Calu3 (cell line): ENCODE measurements at regions of chr2 and their contacts with region 1.

Region 1: GRCh38 chr2:32484937-32485336 is 128.1 kb downstream of the BIRC6 start:
- DNase-seq: no peak
- H3K4me3 Mint-ChIP-seq: no peak overlapping the region
- H3K27ac Mint-ChIP-seq: no peak overlapping the region
- H3K4me1 Mint-ChIP-seq: no peaks in the 10 kb centered on the region
- H3K27me3 Mint-ChIP-seq: no peaks in the 10 kb centered on the region
- CTCF ChIP-seq: no peak

Region 2: DNA sequence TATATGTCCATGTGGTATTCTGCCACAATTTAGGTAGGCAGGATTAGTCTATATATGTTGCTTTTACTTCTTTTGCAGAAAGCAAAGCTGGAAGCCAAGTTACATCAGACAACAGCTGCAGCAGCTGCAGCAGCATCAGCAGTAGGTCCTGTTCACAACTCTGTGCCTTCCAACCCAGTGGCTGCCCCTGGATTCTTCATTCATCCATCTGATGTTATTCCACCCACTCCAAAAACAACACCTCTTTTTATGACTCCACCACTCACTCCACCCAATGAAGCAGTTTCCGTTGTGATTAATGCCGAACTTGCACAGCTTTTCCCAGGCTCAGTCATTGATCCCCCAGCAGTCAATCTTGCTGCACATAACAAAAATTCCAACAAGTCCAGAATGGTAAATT is 20.5 kb before region 1 on chr2:
- CTCF ChIA-PET with region 1: interaction called, 10 read pairs
- intact Hi-C with region 1: no loop called
- DNase-seq: no peak
- H3K4me3 Mint-ChIP-seq: no peak overlapping the region
- H3K27ac Mint-ChIP-seq: no peak overlapping the region
- H3K4me1 Mint-ChIP-seq: no peaks in the 10 kb centered on the region
- H3K27me3 Mint-ChIP-seq: no peaks in the 10 kb centered on the region
- CTCF ChIP-seq: no peak